ENCODE measurements at regions of chr11 and their contacts with region 1.

Region 1: GRCh38 chr11:118488480-118489109 is 38.7 kb upstream of the TTC36 start:
- DNase-seq: peak; percentile 80
- H3K4me3 ChIP-seq: no peak overlapping the region
- H3K27ac ChIP-seq: no peak overlapping the region
- H3K4me1 ChIP-seq: no peaks in the 10 kb centered on the region
- H3K27me3 ChIP-seq: no peaks in the 10 kb centered on the region
- CTCF ChIP-seq: peak; percentile 74 to 76
- POLR2A ChIP-seq: no peak

Region 2: GRCh38 chr11:118145285-118146227 is 343.0 kb before region 1 on chr11:
- CTCF ChIA-PET with region 1: no interaction called
- POLR2A ChIA-PET with region 1: no interaction called
- dilution Hi-C with region 1: no loop called
- intact Hi-C with region 1: loop called (anchors 1 kb)
- DNase-seq: peak; percentile 59
- H3K4me3 ChIP-seq: peak overlapping the region; percentile 19 to 44 (median 43)
- H3K27ac ChIP-seq: no peak overlapping the region
- H3K4me1 ChIP-seq: no peaks in the 10 kb centered on the region
- H3K27me3 ChIP-seq: peaks cover 40 to 47% of the 10 kb centered on the region in 2 experiments
- CTCF ChIP-seq: peak; percentile 86 to 90
- POLR2A ChIP-seq: no peak

Region 3: GRCh38 chr11:118380571-118380970 is 108.0 kb before region 1 on chr11:
- CTCF ChIA-PET with region 1: interaction called, 5 read pairs
- POLR2A ChIA-PET with region 1: no interaction called
- dilution Hi-C with region 1: loop called (anchors 25 kb)
- intact Hi-C with region 1: loop called (anchors 5 kb)
- DNase-seq: peak; percentile 5
- H3K4me3 ChIP-seq: no peak overlapping the region
- H3K27ac ChIP-seq: no peak overlapping the region
- H3K4me1 ChIP-seq: no peaks in the 10 kb centered on the region
- H3K27me3 ChIP-seq: no peaks in the 10 kb centered on the region
- CTCF ChIP-seq: no peak
- POLR2A ChIP-seq: no peak

Region 4: GRCh38 chr11:118415739-118416284 is 72.8 kb before region 1 on chr11:
- CTCF ChIA-PET with region 1: interaction called, 10 read pairs
- POLR2A ChIA-PET with region 1: no interaction called
- dilution Hi-C with region 1: no loop called
- intact Hi-C with region 1: loop called (anchors 5 kb)
- DNase-seq: peak; percentile 82
- H3K4me3 ChIP-seq: no peak overlapping the region
- H3K27ac ChIP-seq: no peak overlapping the region
- H3K4me1 ChIP-seq: peaks cover 13% of the 10 kb centered on the region
- H3K27me3 ChIP-seq: no peaks in the 10 kb centered on the region
- CTCF ChIP-seq: no peak
- POLR2A ChIP-seq: no peak

Region 5: DNA sequence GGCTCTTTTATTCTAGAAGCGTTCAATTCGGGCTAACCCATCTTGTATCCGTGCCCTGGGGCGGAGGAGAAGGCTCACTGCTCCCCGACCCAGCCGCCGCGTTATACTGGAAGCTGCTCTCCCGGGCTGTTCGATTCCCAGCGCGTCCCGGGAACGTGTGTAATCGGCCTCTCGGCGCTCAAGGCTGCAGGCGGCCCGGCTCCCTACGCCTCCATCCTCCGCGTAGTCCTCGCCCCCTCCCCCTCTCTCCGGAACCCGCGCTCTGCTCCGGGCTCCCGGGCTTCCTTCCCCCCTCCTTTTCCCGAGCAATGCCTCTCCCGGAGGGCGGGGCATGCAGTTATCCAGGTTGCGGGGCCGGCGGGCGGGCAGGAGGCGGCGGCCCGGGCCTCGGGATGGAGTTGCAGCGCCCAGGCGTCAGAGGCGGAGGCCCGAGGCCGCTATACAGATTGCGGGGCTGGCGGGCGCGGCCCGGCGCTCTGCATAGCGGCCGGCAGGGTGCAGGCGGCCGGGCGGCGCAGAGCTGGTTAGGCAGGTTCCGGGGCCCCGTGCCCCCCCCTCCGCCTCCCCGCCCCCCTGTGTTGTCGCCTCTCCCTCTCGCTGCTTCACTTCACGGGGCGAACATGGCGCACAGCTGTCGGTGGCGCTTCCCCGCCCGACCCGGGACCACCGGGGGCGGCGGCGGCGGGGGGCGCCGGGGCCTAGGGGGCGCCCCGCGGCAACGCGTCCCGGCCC is 52.5 kb before region 1 on chr11 and contains the start of gene KMT2A:
- CTCF ChIA-PET with region 1: interaction called, 9 read pairs
- POLR2A ChIA-PET with region 1: no interaction called
- dilution Hi-C with region 1: no loop called
- intact Hi-C with region 1: loop called (anchors 1 kb)
- DNase-seq: peak; percentile 98
- H3K4me3 ChIP-seq: peak within 1 kb of the TSS; percentile 82 to 94 (median 90)
- H3K27ac ChIP-seq: peak within 1 kb of the TSS; percentile 45
- H3K4me1 ChIP-seq: peaks cover 29% of the 10 kb centered on the region
- H3K27me3 ChIP-seq: no peaks in the 10 kb centered on the region
- CTCF ChIP-seq: no peak
- POLR2A ChIP-seq: peak; percentile 81
- total RNA-seq, gene KMT2A: 63.9 and 64.1 TPM in 2 replicates